Activated naive CD4-positive, alpha-beta T cell treated with anti-CD3 and anti-CD28 coated beads for 36 hours (primary cell): ENCODE measurements at regions of chr4 and their contacts with region 1.

Region 1: GRCh38 chr4:103019308-103020124 is at the start of gene SLC9B1:
- DNase-seq: peak; percentile 96
- H3K4me3 Mint-ChIP-seq: peak within 1 kb of the TSS; percentile 96
- H3K27ac Mint-ChIP-seq: peak within 1 kb of the TSS; percentile 97
- H3K4me1 Mint-ChIP-seq: peaks cover 20% of the 10 kb centered on the region
- H3K27me3 Mint-ChIP-seq: no peaks in the 10 kb centered on the region
- total RNA-seq, gene SLC9B1: 2.0 to 3.5 TPM

Region 2: DNA sequence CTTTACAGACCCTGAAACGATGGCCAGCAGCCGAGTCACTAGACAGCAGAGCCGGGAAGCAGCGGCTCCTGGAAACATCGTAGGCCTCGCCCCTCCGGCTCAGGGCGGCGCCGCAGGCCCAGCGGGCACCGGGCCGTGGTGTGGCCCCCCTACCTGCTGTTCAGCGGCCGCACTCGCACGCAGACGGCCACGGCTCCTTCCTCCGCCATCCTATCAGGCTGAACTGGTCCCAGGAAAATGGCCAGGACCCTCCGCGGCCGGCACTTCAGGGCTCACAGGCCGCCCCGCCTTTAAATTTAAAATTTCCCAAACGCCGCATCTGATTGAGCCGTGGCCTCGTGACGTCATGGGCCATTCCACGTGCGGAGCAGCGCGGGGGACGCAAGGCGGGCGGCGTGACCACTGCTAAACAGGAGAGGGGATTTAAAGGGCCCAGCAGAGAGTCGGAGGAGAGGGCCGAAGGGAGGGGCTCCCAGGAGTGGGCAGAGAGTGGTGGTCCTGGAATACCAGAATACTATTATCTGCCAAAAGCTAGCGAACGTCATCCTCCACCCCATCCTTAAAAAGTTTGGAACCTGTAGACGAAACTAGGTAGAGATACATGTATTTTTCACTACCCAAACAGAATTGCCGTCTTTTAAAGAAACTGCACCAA is 178.7 kb after region 1 on chr4 and contains the start of gene CENPE:
- CTCF ChIA-PET with region 1: no interaction called
- intact Hi-C with region 1: loop called (anchors 1 kb)
- DNase-seq: peak; percentile 89
- H3K4me3 Mint-ChIP-seq: peak within 1 kb of the TSS; percentile 87
- H3K27ac Mint-ChIP-seq: peak within 1 kb of the TSS; percentile 89
- H3K4me1 Mint-ChIP-seq: peaks cover 7% of the 10 kb centered on the region
- H3K27me3 Mint-ChIP-seq: peaks cover 3% of the 10 kb centered on the region
- total RNA-seq, gene CENPE: 38.1 to 45.2 TPM